Panc1 (cell line): ENCODE measurements at regions of chr2 and their contacts with region 1.

Region 1: DNA sequence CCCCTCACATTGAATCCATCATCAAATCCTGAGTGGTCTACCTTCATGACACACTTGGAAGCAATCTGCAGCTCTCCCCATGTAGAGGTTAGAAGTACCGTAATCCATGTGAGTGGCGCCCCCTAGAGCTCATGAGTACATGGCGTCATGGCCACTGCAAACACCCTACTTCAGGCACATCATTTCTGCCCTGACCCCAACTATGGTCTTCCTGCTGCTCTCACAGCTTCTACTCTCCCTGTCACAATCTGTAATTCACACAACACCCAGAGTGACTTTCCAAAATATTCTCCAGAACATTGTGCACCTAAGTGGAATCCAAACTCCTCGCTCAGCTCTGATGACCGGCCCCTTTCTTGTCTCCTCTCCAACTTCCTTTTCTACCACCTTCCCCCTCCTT is 141.9 kb downstream of the ANKRD44 start:
- DNase-seq: no peak
- ATAC-seq: peak; percentile 94
- H3K4me3 ChIP-seq: no peak overlapping the region
- H3K27ac ChIP-seq: no peak overlapping the region
- H3K4me1 ChIP-seq: no peaks in the 10 kb centered on the region
- H3K27me3 ChIP-seq: no peaks in the 10 kb centered on the region
- CTCF ChIP-seq: peak; percentile 80

Region 2: DNA sequence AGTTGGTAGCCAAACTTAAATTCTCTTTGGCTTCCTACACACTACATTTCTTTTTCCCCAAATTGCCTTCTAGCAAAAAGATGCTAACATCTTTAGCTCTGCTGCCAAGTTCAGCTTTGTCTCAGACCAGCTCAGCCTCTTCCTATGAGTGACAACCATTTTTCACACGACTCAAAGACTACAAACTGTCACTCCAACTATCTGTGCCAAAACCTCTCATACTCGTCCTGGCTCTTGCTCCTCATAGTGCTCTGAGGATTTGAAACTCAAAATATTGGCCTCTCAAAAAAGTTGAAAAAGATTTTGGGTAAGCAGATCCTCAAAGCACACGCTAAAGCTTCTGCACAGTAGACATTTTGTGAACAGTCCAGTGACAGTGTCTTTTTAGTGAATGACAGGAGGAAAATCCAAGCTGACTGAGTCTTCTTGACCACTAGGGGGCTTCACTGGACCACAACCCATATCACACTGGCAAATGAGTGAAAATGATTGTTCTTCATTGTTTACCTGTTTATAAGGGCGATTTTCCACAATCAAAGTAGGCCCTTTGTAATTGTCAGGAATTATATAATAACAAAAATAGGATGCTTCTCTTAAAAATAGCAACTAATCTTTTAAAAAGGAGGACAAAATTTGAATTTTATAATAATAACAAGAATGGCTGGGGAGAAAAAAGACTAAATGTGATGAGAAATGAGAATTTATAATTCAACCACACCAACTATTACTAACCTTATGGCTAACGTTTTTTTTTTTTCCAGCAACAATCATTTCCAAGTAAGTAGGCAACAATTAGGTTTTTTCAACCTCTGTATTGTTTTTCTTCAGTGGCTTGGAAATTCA is 156.7 kb before region 1 on chr2:
- CTCF ChIA-PET with region 1: no interaction called
- POLR2A ChIA-PET with region 1: no interaction called
- in situ Hi-C with region 1: no loop called
- intact Hi-C with region 1: loop called (anchors 5 kb)
- DNase-seq: no peak
- ATAC-seq: peak; percentile 90
- H3K4me3 ChIP-seq: no peak overlapping the region
- H3K27ac ChIP-seq: no peak overlapping the region
- H3K4me1 ChIP-seq: no peaks in the 10 kb centered on the region; the same call in 1 of the 2 replicates
- H3K27me3 ChIP-seq: no peaks in the 10 kb centered on the region
- CTCF ChIP-seq: peak; percentile 90